ENCODE measurements at regions of chr6 and their contacts with region 1.

Region 1: GRCh38 chr6:39166189-39166911 is 51.4 kb upstream of the SAYSD1 start:
- DNase-seq: peak; percentile 91
- H3K4me3 Mint-ChIP-seq: no peak overlapping the region
- H3K27ac Mint-ChIP-seq: no peak overlapping the region
- H3K4me1 Mint-ChIP-seq: no peaks in the 10 kb centered on the region
- H3K27me3 Mint-ChIP-seq: no peaks in the 10 kb centered on the region

Region 2: DNA sequence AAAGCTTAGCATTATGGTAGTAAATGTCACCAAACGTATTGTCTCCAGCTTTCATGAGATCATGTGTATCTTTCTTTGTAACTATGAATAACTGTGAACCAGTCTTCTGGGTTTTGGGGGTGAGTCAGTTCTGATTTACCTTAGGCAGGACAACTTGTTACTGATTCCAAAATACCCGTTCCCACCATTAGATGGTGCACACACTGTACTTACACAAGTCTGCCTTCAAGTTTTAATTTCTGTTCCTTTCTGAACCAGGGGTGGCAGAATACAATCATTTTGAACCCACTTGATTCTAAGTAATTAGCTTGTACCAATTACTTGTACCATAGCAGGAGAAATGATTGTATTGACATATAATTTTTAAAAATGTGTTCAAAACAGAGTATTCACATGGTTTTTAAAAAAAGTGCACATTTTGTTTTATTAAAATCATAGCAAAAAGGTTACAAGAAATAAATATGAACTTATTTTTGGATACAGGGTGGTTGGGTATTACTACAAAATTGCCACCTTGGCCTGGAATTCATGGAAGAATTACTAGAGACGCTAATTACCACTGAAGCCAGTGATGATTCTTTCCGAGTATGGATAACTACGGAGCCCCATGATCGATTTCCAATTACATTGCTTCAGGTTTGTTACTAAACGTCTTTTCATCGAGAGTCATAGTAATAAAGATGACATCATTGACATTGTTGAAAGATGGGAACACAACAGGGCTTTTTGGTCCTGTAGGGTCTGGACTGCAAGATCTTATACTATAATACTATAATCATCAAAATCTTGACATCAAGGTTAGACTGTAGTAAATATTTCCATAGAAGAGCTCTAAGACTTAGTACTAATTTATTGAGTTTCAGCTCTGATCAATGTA is 192.9 kb before region 1 on chr6:
- CTCF ChIA-PET with region 1: interaction called, 9 read pairs
- intact Hi-C with region 1: loop called (anchors 2 kb)
- DNase-seq: peak; percentile 60
- H3K4me3 Mint-ChIP-seq: no peak overlapping the region
- H3K27ac Mint-ChIP-seq: no peak overlapping the region
- H3K4me1 Mint-ChIP-seq: no peaks in the 10 kb centered on the region
- H3K27me3 Mint-ChIP-seq: no peaks in the 10 kb centered on the region

Region 3: GRCh38 chr6:38997128-38997761 is 169.1 kb before region 1 on chr6:
- CTCF ChIA-PET with region 1: interaction called, 12 read pairs
- intact Hi-C with region 1: loop called (anchors 5 kb)
- DNase-seq: peak; percentile 56
- H3K4me3 Mint-ChIP-seq: no peak overlapping the region
- H3K27ac Mint-ChIP-seq: no peak overlapping the region
- H3K4me1 Mint-ChIP-seq: no peaks in the 10 kb centered on the region
- H3K27me3 Mint-ChIP-seq: peaks cover 19% of the 10 kb centered on the region

Region 4: DNA sequence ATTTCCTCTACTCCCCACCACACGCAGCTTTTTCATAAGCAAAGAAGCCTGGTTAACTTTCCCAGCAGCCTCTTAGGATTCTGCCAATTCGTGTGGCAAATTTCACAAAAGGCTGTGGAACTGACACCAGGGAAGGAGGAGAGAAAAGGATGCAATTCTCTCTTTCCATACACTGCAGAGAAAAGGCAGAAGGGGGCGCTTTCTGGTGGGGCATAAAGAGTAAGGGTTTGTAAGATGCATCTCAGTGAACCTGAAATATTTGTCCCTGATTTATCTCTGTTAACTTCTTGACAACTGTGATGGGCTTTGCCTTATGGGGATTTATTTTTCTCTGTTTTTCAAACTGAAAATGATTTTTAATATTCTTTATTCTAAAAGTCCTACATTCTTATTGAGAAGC is 163.3 kb before region 1 on chr6:
- CTCF ChIA-PET with region 1: interaction called, 4 read pairs
- intact Hi-C with region 1: loop called (anchors 5 kb)
- DNase-seq: peak; percentile 48
- H3K4me3 Mint-ChIP-seq: no peak overlapping the region
- H3K27ac Mint-ChIP-seq: no peak overlapping the region
- H3K4me1 Mint-ChIP-seq: no peaks in the 10 kb centered on the region
- H3K27me3 Mint-ChIP-seq: peaks cover 19% of the 10 kb centered on the region

Region 5: DNA sequence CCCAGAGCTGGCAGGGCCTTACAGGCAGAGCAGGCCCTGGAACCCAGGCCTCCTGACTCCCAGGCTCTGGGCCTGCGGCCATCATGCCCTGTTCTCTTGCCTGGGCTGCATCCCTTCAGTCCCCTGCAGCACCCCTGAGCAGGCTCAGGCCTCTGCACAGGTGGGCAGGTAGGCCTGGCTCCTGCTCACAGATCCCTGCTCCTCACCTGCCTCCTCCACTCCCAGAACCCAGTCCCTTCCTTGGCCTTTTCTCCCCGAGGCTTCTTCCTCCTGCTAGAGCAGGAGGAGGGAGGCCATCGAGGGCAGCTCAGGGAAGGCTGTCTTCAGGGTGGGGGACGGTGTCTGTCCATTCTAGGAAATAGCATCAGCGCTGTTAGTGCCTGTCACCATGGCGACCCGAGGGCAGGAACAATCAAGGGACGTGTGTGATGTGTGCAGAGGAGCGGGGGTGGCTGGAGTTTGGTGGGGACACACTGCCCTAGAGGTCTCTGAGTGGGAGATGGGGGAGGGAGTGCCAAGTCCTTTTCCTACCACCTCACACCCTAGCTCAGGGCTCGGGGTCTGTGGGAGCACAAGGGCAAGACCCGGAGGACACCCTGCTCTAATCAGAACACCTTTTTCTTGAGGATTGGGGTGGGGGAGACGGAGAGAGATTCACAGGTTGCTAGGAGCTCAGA is 91.2 kb before region 1 on chr6:
- CTCF ChIA-PET with region 1: no interaction called
- intact Hi-C with region 1: no loop called
- DNase-seq: no peak
- H3K4me3 Mint-ChIP-seq: no peak overlapping the region
- H3K27ac Mint-ChIP-seq: no peak overlapping the region
- H3K4me1 Mint-ChIP-seq: no peaks in the 10 kb centered on the region
- H3K27me3 Mint-ChIP-seq: no peaks in the 10 kb centered on the region

Region 6: DNA sequence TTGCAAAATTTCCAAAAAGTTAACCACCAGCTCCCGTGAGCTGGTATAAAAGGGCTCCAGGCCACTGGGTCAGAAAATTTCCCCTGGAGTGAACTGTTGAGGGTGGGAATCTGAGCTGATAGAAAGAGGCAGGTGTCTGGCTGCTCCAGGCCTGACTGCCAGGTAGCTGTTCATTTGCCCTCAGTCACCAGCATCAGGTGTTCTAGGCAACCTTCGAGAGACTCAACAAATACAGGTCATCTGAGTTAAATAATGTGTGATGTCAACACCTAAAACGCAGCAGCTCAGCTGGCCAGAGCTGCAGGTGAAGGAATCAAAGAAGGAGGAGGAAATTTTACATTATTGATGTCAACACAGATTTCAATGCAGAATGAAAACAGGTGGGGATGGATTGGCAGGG is 16.3 kb after region 1 on chr6:
- CTCF ChIA-PET with region 1: interaction called, 12 read pairs
- intact Hi-C with region 1: no loop called
- DNase-seq: no peak
- H3K4me3 Mint-ChIP-seq: no peak overlapping the region
- H3K27ac Mint-ChIP-seq: no peak overlapping the region
- H3K4me1 Mint-ChIP-seq: no peaks in the 10 kb centered on the region
- H3K27me3 Mint-ChIP-seq: no peaks in the 10 kb centered on the region

Region 7: GRCh38 chr6:39228992-39229767 is 62.8 kb after region 1 on chr6 and contains the start of gene KCNK5:
- CTCF ChIA-PET with region 1: interaction called, 6 read pairs
- intact Hi-C with region 1: loop called (anchors 1 kb)
- DNase-seq: peak; percentile 89
- H3K4me3 Mint-ChIP-seq: peak within 1 kb of the TSS; percentile 87
- H3K27ac Mint-ChIP-seq: peak within 1 kb of the TSS; percentile 87
- H3K4me1 Mint-ChIP-seq: peaks cover 44% of the 10 kb centered on the region
- H3K27me3 Mint-ChIP-seq: peaks cover 1% of the 10 kb centered on the region
- total RNA-seq, gene KCNK5: 9.0 to 9.2 TPM

Region 8: GRCh38 chr6:39309942-39310531 is 143.7 kb after region 1 on chr6:
- CTCF ChIA-PET with region 1: interaction called, 391 read pairs
- intact Hi-C with region 1: loop called (anchors 1 kb)
- DNase-seq: peak; percentile 75
- H3K4me3 Mint-ChIP-seq: no peak overlapping the region
- H3K27ac Mint-ChIP-seq: no peak overlapping the region
- H3K4me1 Mint-ChIP-seq: peaks cover 7% of the 10 kb centered on the region
- H3K27me3 Mint-ChIP-seq: peaks cover 30% of the 10 kb centered on the region